Spleen (tissue), 13 donors: ENCODE measurements at regions of chr10 and their contacts with region 1.

Region 1: DNA sequence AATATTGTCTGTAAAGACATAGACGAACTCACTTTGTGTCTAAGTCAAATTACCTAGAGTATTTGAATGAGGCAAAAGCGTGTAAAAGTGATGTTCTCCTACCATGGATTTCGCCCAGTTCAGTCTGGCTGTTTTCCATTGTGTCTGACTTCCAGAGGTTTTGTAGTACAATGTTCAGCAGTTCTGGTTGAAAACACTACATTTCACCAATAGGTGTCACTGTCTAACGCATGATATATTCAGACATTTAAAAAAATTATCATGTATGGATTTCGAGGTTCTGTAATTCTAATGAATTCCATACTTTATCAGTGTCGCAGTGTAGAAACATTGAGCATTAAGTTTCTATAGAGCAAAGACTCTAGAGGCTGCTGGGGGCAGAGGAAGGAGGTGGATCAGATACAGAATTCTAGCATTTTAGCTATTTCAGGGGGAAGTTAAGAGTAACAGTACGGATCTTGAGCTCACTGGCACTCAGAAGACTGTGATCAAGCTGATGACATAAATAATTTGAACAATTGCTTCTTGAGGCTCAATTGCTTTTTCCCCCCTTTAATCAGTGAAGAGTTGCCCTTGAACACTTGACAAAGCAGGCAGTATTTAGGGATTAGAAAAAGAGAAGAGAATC is 196.9 kb upstream of the RHOBTB1 start:
- DNase-seq: no peak
- H3K4me3 ChIP-seq: no peak overlapping the region
- H3K27ac ChIP-seq: no peak overlapping the region
- H3K4me1 ChIP-seq: peaks cover 0 to 4% (median 0%) of the 10 kb centered on the region in 6 donors
- H3K27me3 ChIP-seq: no peaks in the 10 kb centered on the region
- CTCF ChIP-seq: peak; percentile 19 to 77 (median 63)
- POLR2A ChIP-seq: no peak

Region 2: DNA sequence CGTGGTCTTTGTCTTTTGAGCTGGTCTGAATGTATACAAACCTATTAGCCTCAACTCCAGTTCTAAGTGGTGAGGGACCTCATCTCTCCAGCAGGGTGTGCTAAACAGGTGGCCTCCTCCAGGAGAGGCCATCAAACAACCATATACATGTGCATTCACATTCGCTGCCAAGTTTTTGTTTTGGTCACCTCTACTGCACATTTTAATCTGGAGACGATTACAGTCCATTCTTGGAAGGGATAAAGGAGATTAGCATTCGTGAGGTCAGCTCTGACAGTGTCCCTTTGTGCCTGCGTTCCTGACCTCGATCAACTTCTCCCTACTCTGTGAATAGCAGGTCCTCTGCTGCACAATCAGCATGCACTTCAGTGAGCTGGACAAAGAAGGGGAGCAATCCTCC is 257.7 kb before region 1 on chr10:
- intact Hi-C with region 1: no loop called
- DNase-seq: no peak
- H3K4me3 ChIP-seq: no peak overlapping the region
- H3K27ac ChIP-seq: no peak overlapping the region
- H3K4me1 ChIP-seq: no peaks in the 10 kb centered on the region
- H3K27me3 ChIP-seq: no peaks in the 10 kb centered on the region
- CTCF ChIP-seq: peak in 7 of 11 experiments; percentile 19 to 44 (median 38)
- POLR2A ChIP-seq: no peak

Region 3: DNA sequence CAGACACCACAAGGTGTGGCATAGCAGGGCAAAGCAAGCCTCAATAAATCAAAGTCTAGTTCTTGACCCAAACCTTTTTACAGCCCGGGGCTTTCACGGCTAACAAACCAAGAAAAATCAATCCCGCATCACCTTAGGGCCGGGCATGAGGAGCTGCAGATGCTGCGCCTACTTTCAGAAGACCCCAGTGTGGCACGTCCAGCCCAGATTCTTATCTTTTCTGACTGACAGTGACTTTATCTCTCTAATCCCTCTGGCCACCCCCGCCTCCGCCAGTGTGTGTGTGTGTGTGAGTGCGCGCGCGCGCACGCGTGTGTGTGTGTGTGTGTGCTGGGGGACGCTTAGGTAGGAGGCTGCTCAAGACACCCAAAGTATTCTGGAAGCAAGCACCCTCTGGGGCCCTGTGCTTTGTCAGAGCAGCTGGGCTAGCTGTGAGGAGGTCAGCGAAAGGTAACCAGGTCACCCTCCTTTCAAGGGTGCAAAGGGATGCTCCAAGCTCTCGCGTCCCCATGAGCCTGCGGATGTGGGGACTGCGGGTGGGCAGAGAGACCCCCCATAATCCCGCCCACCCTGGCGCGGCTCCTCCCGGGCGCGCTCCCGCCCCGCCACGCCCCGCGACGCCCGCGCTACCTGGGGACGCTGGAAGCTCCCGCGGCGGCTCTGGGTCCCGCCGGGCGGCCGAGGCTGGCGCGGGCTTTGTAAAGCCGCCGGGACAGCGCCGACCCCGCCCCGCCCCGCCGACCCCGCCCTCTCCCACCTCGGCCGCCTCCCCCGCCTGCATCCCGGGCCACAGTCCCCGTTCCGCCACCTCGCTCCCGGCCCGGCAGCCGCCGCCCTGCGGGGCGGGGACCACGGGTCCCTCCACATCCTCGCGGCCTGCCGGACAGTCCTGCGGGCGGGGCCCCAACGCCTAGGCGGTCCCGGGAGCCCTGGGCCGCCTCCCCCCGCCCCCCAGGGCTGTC is 139.8 kb before region 1 on chr10:
- intact Hi-C with region 1: no loop called
- DNase-seq: peak; percentile 70
- H3K4me3 ChIP-seq: peak overlapping the region in 7 of 8 donors; percentile 20 to 65 (median 34)
- H3K27ac ChIP-seq: no peak overlapping the region
- H3K4me1 ChIP-seq: peaks cover 0 to 13% (median 5%) of the 10 kb centered on the region in 6 donors
- H3K27me3 ChIP-seq: peaks cover 0 to 37% (median 20%) of the 10 kb centered on the region in 7 donors
- CTCF ChIP-seq: no peak
- POLR2A ChIP-seq: no peak

Region 4: GRCh38 chr10:61175316-61175715 is 34.4 kb after region 1 on chr10:
- intact Hi-C with region 1: no loop called
- DNase-seq: no peak
- H3K4me3 ChIP-seq: no peak overlapping the region
- H3K27ac ChIP-seq: no peak overlapping the region
- H3K4me1 ChIP-seq: no peaks in the 10 kb centered on the region
- H3K27me3 ChIP-seq: no peaks in the 10 kb centered on the region
- CTCF ChIP-seq: no peak
- POLR2A ChIP-seq: no peak

Region 5: GRCh38 chr10:61733358-61733940 is 592.6 kb after region 1 on chr10:
- intact Hi-C with region 1: loop called (anchors 5 kb)
- DNase-seq: no peak
- H3K4me3 ChIP-seq: no peak overlapping the region
- H3K27ac ChIP-seq: no peak overlapping the region
- H3K4me1 ChIP-seq: peaks cover 0 to 7% (median 3%) of the 10 kb centered on the region in 6 donors
- H3K27me3 ChIP-seq: no peaks in the 10 kb centered on the region
- CTCF ChIP-seq: peak in 9 of 11 experiments; percentile 14 to 57 (median 45)
- POLR2A ChIP-seq: no peak